ENCODE measurements at regions of chr3 and their contacts with region 1.

Region 1: DNA sequence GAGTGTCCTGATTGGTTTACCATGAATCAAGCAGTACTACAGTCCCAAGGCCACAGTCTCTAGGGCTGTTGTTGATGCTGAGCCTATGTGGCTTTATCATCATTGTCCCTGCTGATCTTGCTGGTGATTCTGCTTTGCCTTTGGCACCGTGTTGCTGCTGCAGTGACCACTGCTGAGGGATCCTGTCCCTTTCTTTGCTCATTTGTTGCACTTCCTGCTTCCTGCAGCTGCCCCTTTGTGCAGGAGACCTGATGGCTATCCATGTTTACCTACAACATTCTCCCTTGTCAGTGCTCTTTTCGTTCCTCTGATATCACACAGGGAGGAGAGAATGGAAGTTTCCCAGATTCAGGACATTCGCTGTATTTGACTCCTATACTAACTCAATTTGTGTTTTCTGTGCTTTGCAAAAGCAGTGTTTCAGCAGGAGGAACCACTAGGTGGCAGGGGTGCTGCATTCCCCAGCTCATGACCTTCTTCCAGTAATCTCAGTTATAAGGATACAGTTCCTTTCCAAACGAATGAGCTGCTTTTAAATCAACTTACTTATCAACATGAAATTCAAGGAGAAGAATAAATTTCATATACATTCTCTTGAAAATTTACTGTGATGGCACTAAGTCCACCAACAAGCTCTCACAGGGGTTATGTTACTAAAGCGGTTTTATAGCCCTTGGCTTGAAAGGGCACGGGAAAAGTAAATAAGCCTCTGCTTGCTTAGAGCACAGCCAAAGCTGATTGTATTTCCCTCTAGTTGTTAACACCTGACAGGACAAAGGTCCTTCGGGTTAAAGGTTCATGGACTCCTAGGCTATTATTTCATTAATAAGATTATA is 9.7 kb upstream of the THUMPD3 start:
- DNase-seq: peak; percentile 73
- H3K4me3 ChIP-seq: 0 out of 2 replicates have a peak overlapping the region, but pooled peaks have one; percentile 0
- H3K4me3 Mint-ChIP-seq: peak overlapping the region; percentile 71
- H3K27ac Mint-ChIP-seq: peak overlapping the region; percentile 91
- H3K4me1 ChIP-seq: peaks cover 60% of the 10 kb centered on the region
- H3K4me1 Mint-ChIP-seq: peaks cover 49% of the 10 kb centered on the region
- H3K27me3 ChIP-seq: no peaks in the 10 kb centered on the region
- H3K27me3 Mint-ChIP-seq: no peaks in the 10 kb centered on the region
- CTCF ChIP-seq: peak; percentile 75 to 77

Region 2: DNA sequence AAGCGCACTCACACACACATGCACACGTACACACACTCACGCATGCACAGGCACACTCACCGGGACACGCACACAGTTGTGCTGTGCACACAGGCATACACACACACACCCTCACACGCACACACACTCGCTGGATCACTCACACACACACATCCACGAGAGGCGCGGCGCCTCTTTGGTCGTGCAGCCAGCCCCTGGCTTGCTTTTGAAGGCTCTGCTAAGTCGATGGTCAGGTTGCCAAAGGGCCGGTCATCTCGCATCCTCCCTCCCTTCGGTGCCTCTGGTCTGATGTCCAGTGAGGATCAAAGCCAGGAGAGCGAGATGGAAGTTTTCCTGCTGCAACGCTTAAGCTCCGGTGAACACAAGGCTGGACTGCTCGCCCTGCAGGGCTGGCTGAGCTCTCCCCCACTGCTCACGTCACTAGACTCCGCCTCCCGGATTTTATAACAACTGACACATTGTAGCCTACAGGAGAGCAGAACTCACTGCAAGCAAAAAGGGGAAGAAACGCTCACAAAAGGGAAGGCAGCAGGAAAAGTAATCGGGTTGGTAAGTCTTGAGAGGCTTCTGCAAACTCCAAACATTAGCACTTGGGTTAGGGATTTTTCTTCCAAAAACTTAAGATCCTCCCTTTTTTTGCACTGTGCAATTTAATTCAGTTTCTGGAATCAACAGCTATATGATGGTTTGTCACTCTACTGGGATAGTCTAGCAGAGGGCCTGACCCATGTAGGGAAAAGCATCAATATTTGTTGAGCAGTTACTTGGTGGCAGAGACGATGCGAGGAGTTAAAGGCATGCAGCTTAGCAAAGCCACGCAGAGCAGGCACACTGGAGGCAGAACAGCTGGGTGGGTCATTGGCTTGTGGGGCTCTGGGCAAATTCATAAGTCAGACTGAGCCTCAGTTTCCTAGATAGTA is 103.6 kb before region 1 on chr3 and contains the start of gene SRGAP3:
- CTCF ChIA-PET with region 1: no interaction called
- POLR2A ChIA-PET with region 1: no interaction called
- intact Hi-C with region 1: no loop called
- DNase-seq: peak; percentile 87 to 88
- H3K4me3 ChIP-seq: peak within 1 kb of the TSS; percentile 45
- H3K4me3 Mint-ChIP-seq: peak within 1 kb of the TSS; percentile 81
- H3K27ac Mint-ChIP-seq: peak within 1 kb of the TSS; percentile 21
- H3K4me1 ChIP-seq: no peaks in the 10 kb centered on the region; the same call in 1 of the 2 replicates
- H3K4me1 Mint-ChIP-seq: no peaks in the 10 kb centered on the region
- H3K27me3 ChIP-seq: no peaks in the 10 kb centered on the region
- H3K27me3 Mint-ChIP-seq: peaks cover 4% of the 10 kb centered on the region
- CTCF ChIP-seq: peak in 1 of 2 experiments; percentile 41
- total RNA-seq, gene SRGAP3: 1.3 and 1.6 TPM in 2 replicates

Region 3: DNA sequence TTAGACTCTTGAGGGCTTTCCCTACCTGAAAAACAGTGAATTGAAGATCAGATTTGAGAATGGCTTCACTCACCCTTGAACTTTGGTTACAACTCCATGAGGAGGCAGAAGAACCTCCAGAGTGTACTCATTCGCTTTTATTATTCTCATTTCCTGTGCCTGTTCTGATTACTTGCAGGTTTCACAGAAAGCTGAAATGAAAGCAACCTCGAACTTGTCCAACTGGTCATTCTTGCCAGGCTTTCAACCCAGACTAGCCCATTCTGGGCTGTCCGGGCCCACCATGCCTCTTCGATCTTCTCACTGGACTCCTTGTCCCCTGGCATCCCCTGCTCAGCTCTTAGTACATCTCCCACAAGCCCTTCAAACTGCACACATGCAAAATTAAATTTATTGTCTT is 10.4 kb before region 1 on chr3:
- CTCF ChIA-PET with region 1: interaction called, 3 read pairs
- POLR2A ChIA-PET with region 1: interaction called, 11 read pairs
- intact Hi-C with region 1: no loop called
- DNase-seq: no peak
- H3K4me3 ChIP-seq: no peak overlapping the region
- H3K4me3 Mint-ChIP-seq: no peak overlapping the region
- H3K27ac Mint-ChIP-seq: no peak overlapping the region
- H3K4me1 ChIP-seq: no peaks in the 10 kb centered on the region
- H3K4me1 Mint-ChIP-seq: peaks cover 10% of the 10 kb centered on the region
- H3K27me3 ChIP-seq: no peaks in the 10 kb centered on the region
- H3K27me3 Mint-ChIP-seq: no peaks in the 10 kb centered on the region
- CTCF ChIP-seq: no peak

Region 4: GRCh38 chr3:9396700-9397521 is 43.8 kb after region 1 on chr3:
- CTCF ChIA-PET with region 1: interaction called, 9 read pairs
- POLR2A ChIA-PET with region 1: interaction called, 24 read pairs
- intact Hi-C with region 1: loop called (anchors 1 kb)
- DNase-seq: peak; percentile 99
- H3K4me3 ChIP-seq: peak overlapping the region; percentile 91
- H3K4me3 Mint-ChIP-seq: peak overlapping the region; percentile 94
- H3K27ac Mint-ChIP-seq: peak overlapping the region; percentile 95
- H3K4me1 ChIP-seq: peaks cover 32% of the 10 kb centered on the region
- H3K4me1 Mint-ChIP-seq: peaks cover 19% of the 10 kb centered on the region
- H3K27me3 ChIP-seq: no peaks in the 10 kb centered on the region
- H3K27me3 Mint-ChIP-seq: no peaks in the 10 kb centered on the region
- CTCF ChIP-seq: no peak

Region 5: GRCh38 chr3:9439331-9439730 is 86.2 kb after region 1 on chr3:
- CTCF ChIA-PET with region 1: no interaction called
- POLR2A ChIA-PET with region 1: no interaction called
- intact Hi-C with region 1: loop called (anchors 5 kb)
- DNase-seq: no peak
- H3K4me3 ChIP-seq: no peak overlapping the region
- H3K4me3 Mint-ChIP-seq: no peak overlapping the region
- H3K27ac Mint-ChIP-seq: no peak overlapping the region
- H3K4me1 ChIP-seq: 0 out of 2 replicates have a peak, but pooled peaks cover 3% of the 10 kb centered on the region
- H3K4me1 Mint-ChIP-seq: peaks cover 6% of the 10 kb centered on the region
- H3K27me3 ChIP-seq: no peaks in the 10 kb centered on the region
- H3K27me3 Mint-ChIP-seq: no peaks in the 10 kb centered on the region
- CTCF ChIP-seq: no peak

Region 6: GRCh38 chr3:9731206-9732079 is 378.3 kb after region 1 on chr3 and contains the start of gene BRPF1:
- CTCF ChIA-PET with region 1: no interaction called
- POLR2A ChIA-PET with region 1: no interaction called
- intact Hi-C with region 1: loop called (anchors 10 kb)
- DNase-seq: peak; percentile 98 to 99
- H3K4me3 ChIP-seq: peak within 1 kb of the TSS; percentile 85
- H3K4me3 Mint-ChIP-seq: peak within 1 kb of the TSS; percentile 84
- H3K27ac Mint-ChIP-seq: peak within 1 kb of the TSS; percentile 83
- H3K4me1 ChIP-seq: peaks cover 7% of the 10 kb centered on the region; the same call in 1 of the 2 replicates
- H3K4me1 Mint-ChIP-seq: peaks cover 23% of the 10 kb centered on the region
- H3K27me3 ChIP-seq: no peaks in the 10 kb centered on the region
- H3K27me3 Mint-ChIP-seq: no peaks in the 10 kb centered on the region
- CTCF ChIP-seq: no peak
- total RNA-seq, gene BRPF1: 24.7 and 26.0 TPM in 2 replicates